Gastrocnemius medialis (tissue), 4 donors: ENCODE measurements at regions of chr12 and their contacts with region 1.

Region 1: DNA sequence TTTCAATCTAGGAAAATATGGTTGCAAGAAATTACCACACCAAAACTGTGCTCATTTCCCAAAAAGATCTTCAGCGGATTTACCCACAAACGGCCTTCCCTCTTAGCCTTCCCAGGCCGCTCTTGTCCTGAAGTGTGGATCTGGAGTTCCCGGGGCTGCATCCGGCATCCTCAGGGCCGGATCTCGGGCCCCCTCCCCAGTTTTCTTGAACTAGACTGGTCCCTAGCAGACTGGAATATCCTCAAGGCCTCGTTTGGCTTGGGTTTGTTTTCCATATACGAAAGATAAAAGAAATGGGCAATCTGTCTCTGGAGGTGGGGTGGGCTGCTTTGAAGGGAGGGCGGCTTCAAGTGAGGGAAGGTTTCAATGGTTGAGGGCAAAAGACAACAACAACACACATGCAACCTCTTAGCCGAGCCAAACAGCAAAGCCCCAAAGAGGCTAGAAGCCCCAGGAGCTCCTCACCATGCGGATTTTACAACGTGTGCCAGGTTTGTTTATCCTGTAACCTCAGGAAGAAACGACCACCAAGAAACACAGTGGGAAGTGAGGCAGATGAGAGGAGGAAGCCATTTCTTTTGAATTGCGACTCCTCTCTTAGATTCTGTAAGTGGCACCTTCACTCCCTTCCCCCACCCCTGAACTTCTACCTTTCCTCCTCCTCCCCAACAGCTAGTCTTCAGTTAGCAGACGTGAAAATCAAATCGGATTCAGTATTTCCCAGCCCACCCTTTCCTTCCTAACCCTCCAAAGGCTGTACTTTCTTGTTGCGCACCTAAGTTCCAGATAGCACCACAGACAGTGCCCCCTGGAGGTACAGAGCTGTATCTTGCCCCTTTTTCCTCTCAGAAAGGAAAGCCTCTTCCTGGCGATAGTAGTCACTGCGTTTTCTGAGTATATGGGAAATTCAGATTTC is 2.6 kb downstream of the MYF6 start:
- DNase-seq: peak; percentile 38 to 70
- ATAC-seq: peak; percentile 20 to 55
- H3K4me3 ChIP-seq: peak overlapping the region; percentile 59 to 91 (median 71)
- H3K27ac ChIP-seq: peak overlapping the region; percentile 83 to 98 (median 92)
- H3K4me1 ChIP-seq: peaks cover 8 to 10% of the 10 kb centered on the region in 2 donors
- H3K27me3 ChIP-seq: peaks cover 0 to 4% (median 0%) of the 10 kb centered on the region in 3 donors
- CTCF ChIP-seq: peak; percentile 78 to 87 (median 81)
- POLR2A ChIP-seq: peak; percentile 6 to 20

Region 2: DNA sequence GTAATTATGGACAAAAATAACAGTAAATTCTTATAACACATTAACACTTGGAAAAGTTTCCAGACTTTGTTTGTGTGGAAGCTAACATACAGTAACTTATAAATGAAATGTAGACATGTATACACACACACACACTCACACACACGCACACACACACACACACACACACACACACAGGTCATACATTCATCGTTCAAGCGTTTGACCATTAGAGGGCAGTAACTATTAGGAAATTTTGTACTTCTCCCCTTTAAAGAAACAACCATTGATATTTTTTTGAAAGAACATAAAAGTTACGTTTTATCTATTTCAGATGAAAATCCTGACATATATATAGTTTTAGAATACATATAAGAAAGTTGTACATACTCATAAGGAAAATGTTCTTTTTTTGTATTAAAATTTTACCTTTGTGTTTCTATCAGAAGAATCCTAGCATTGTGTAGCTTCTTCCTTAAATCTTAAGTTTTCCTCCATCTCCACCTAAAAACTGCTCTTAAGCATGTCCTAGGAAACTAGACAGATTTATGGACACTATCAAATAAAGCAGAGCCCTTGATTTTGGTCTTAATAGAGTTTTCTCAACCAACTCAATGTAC is 237.1 kb before region 1 on chr12:
- in situ Hi-C with region 1: no loop called
- intact Hi-C with region 1: loop called (anchors 2 kb)
- DNase-seq: no peak
- ATAC-seq: peak; percentile 62 to 85
- H3K4me3 ChIP-seq: no peak overlapping the region
- H3K27ac ChIP-seq: no peak overlapping the region
- H3K4me1 ChIP-seq: peaks cover 0 to 4% of the 10 kb centered on the region in 2 donors
- H3K27me3 ChIP-seq: no peaks in the 10 kb centered on the region
- CTCF ChIP-seq: peak; percentile 46 to 79 (median 58)
- POLR2A ChIP-seq: no peak

Region 3: GRCh38 chr12:80627782-80628181 is 82.3 kb before region 1 on chr12:
- in situ Hi-C with region 1: loop called in 1 of 4 experiments (anchors 10 kb)
- intact Hi-C with region 1: loop called (anchors 2 kb)
- DNase-seq: no peak
- ATAC-seq: peak; percentile 91 to 94
- H3K4me3 ChIP-seq: no peak overlapping the region
- H3K27ac ChIP-seq: peak overlapping the region; percentile 56 to 74 (median 64)
- H3K4me1 ChIP-seq: peaks cover 31 to 35% of the 10 kb centered on the region in 2 donors
- H3K27me3 ChIP-seq: no peaks in the 10 kb centered on the region
- CTCF ChIP-seq: no peak
- POLR2A ChIP-seq: no peak

Region 4: DNA sequence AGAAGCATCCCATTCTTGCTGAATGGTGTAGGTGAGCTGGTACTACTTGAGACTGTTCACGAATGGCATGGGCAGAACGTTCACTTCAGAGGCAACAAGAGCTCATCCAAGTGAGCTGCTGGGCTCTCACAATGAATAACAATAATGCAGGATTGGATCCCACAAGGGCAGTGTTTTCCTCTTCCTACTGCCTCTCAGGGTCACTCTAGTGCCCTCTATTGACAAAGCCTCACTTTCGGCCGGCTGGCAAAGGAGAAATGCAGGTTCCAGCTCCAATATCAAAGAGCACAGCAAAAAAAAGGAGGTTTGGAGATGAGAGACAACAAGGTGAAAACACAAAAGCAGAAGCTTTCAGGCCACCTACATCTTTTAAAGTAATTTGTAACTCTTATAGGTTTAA is 77.2 kb before region 1 on chr12:
- in situ Hi-C with region 1: loop called in 1 of 4 experiments (anchors 10 kb)
- intact Hi-C with region 1: loop called (anchors 2 kb)
- DNase-seq: peak in 1 of 2 donors; percentile 30
- ATAC-seq: no peak
- H3K4me3 ChIP-seq: no peak overlapping the region
- H3K27ac ChIP-seq: peak overlapping the region in 2 of 4 donors; percentile 3 to 11
- H3K4me1 ChIP-seq: peaks cover 30 to 40% of the 10 kb centered on the region in 2 donors
- H3K27me3 ChIP-seq: no peaks in the 10 kb centered on the region
- CTCF ChIP-seq: no peak
- POLR2A ChIP-seq: no peak

Region 5: GRCh38 chr12:80679346-80680131 is 30.5 kb before region 1 on chr12:
- in situ Hi-C with region 1: no loop called
- intact Hi-C with region 1: loop called (anchors 2 kb)
- DNase-seq: no peak
- ATAC-seq: peak; percentile 47 to 55
- H3K4me3 ChIP-seq: peak overlapping the region in 2 of 4 donors; percentile 11 to 29
- H3K27ac ChIP-seq: peak overlapping the region; percentile 52 to 84 (median 82)
- H3K4me1 ChIP-seq: peaks cover 60 to 63% of the 10 kb centered on the region in 2 donors
- H3K27me3 ChIP-seq: no peaks in the 10 kb centered on the region
- CTCF ChIP-seq: no peak
- POLR2A ChIP-seq: no peak

Region 6: GRCh38 chr12:80763874-80764273 is 53.8 kb after region 1 on chr12:
- in situ Hi-C with region 1: no loop called
- intact Hi-C with region 1: loop called (anchors 5 kb)
- DNase-seq: no peak
- ATAC-seq: peak; percentile 33 to 57
- H3K4me3 ChIP-seq: no peak overlapping the region
- H3K27ac ChIP-seq: no peak overlapping the region
- H3K4me1 ChIP-seq: no peaks in the 10 kb centered on the region
- H3K27me3 ChIP-seq: no peaks in the 10 kb centered on the region
- CTCF ChIP-seq: peak; percentile 49 to 72 (median 58)
- POLR2A ChIP-seq: no peak